Activated naive CD8-positive, alpha-beta T cell treated with anti-CD3 and anti-CD28 coated beads, Interleukin-2, amount 10 ng/mL, durations not matched to agents 7 days and 5 days (primary cell): ENCODE measurements at regions of chr16 and their contacts with region 1.

Region 1: DNA sequence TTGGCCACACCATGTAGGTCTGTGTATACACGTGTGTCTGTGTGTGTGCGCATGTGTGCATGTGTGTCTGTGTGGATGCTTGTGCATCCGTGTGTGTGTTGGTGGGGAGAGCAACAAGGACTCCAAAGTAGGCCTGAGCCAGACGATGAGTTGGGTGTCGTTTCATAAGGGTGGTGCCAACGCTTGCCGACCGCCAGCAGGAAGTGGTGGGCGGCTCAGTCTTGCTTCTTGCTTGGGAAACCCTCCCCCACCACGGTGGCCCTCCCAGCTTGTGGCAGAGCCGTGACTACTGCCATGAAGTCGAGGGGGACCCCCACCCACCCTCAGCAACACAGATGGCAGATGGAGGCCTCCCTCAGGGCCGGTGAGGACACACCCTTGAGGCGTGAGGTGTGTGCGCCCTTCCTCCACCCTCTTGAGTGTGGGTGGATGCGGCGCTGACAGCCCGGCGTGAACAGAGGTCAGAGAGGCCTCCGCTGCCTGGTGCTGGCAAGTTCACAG is 17.5 kb downstream of the SBK1 start:
- DNase-seq: peak; percentile 81
- ATAC-seq: peak; percentile 89
- H3K4me3 Mint-ChIP-seq: peak overlapping the region; percentile 48
- H3K27ac Mint-ChIP-seq: peak overlapping the region; percentile 94
- H3K4me1 Mint-ChIP-seq: peaks cover 32% of the 10 kb centered on the region
- H3K27me3 Mint-ChIP-seq: no peaks in the 10 kb centered on the region

Region 2: DNA sequence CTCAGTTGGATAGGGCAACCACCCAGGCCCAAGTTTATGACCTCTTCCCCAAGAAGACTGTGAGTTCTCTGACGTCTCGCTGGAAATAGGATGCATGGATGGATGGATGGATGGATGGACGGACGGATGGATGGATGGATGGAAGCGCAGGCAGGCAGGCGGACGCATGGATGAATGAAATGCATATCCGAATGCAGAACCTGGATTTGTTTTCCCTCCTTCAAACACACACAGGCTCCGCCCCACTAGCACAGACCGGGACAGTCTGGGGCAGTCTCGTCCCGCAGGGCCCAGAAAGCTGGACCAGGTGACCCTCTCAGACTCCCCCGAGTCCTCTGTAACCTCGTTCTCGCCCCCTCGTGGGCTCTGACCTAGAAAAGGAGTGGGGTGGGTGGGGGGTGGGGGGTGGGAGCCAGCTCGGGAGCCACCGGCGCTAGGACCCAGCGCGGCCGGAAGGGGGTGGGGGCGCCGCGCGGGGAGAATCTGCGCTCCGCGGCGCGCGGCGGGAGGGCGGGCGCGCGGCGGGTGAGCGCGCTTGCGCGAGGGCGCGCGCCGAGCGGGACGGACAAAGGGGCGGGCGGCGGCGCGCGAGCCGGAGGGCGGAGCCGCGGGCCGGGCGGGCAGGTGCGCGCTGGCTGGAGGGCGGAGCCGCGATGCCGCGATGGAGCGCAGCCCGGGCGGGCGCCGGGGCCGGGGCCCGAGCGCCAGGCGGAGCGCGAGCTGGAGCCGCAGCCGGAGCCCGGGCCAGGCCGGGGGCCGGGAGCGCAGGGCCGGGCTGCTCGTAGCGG is 17.8 kb before region 1 on chr16 and contains the start of gene SBK1:
- POLR2A ChIA-PET with region 1: interaction called, 12 read pairs
- DNase-seq: peak; percentile 95
- ATAC-seq: peak; percentile 94
- H3K4me3 Mint-ChIP-seq: peak within 1 kb of the TSS; percentile 91
- H3K27ac Mint-ChIP-seq: peak within 1 kb of the TSS; percentile 82
- H3K4me1 Mint-ChIP-seq: peaks cover 40% of the 10 kb centered on the region
- H3K27me3 Mint-ChIP-seq: peaks cover 8% of the 10 kb centered on the region
- total RNA-seq, gene SBK1: 15.9 TPM

Region 3: GRCh38 chr16:28321700-28322469 is 12.0 kb after region 1 on chr16:
- POLR2A ChIA-PET with region 1: no interaction called
- DNase-seq: peak; percentile 72
- ATAC-seq: peak; percentile 62
- H3K4me3 Mint-ChIP-seq: no peak overlapping the region
- H3K27ac Mint-ChIP-seq: no peak overlapping the region
- H3K4me1 Mint-ChIP-seq: peaks cover 5% of the 10 kb centered on the region
- H3K27me3 Mint-ChIP-seq: no peaks in the 10 kb centered on the region